ENCODE measurements at regions of chr2 and their contacts with region 1.

Region 1: DNA sequence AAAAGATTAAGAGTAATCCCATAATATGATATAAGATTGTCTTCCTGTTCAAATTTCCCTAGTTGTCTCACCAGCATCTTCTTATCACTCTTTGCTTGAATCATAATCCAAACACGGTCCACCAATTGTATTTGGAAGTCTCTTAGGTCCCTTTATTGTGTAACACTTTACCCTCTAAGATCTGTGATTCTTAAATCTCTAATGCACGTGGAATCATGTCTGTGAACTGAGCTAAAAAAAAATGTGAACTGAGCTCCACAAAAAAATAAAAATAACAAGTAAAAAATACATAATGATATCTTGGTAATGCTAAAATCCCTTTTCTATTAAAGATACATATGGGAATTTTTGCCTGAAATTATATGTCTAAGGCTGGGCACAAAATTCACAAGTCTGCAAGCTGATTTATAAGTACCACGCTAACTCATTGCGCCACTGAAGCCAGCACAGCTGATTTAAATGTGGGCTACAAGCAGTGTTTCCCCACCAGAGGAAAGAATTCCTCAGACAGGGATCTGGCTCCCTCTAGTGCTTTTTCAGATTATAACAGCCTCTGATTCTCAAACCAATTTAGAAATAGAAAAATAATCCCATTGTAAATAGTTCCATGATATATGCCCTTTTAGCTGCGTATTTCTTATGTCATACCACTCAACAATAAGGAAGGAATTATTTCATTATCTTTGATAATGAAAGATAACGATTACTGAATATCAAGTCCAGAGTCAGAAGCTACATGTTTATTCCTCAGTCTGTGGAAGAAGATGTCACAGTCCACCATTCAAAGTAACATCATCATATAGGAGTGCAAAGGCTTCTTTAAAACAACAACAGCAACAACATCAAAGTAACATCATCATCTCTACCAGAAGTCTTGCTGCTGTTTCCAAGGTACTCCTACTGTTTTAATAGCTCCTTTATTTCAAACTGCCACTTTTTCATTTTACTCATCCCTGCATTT is 22.9 kb downstream of the RBM43 start:
- DNase-seq: peak; percentile 51
- H3K4me3 ChIP-seq: no peak overlapping the region
- H3K27ac ChIP-seq: no peak overlapping the region
- H3K4me1 ChIP-seq: peaks cover 7% of the 10 kb centered on the region
- H3K27me3 ChIP-seq: no peaks in the 10 kb centered on the region
- CTCF ChIP-seq: peak; percentile 75 to 79

Region 2: GRCh38 chr2:149799013-149799705 is 1439.6 kb before region 1 on chr2:
- CTCF ChIA-PET with region 1: no interaction called
- dilution Hi-C with region 1: no loop called
- in situ Hi-C with region 1: no loop called
- intact Hi-C with region 1: loop called (anchors 10 kb)
- DNase-seq: peak; percentile 16
- H3K4me3 ChIP-seq: no peak overlapping the region
- H3K27ac ChIP-seq: no peak overlapping the region
- H3K4me1 ChIP-seq: no peaks in the 10 kb centered on the region
- H3K27me3 ChIP-seq: no peaks in the 10 kb centered on the region
- CTCF ChIP-seq: peak; percentile 33 to 60

Region 3: GRCh38 chr2:150478200-150478974 is 760.4 kb before region 1 on chr2:
- CTCF ChIA-PET with region 1: no interaction called
- dilution Hi-C with region 1: no loop called
- in situ Hi-C with region 1: loop called in 1 of 2 experiments (anchors 10 kb)
- intact Hi-C with region 1: loop called (anchors 2 kb)
- DNase-seq: peak; percentile 54
- H3K4me3 ChIP-seq: peak overlapping the region; percentile 3 to 30 (median 21)
- H3K27ac ChIP-seq: peak overlapping the region; percentile 100
- H3K4me1 ChIP-seq: peaks cover 88% of the 10 kb centered on the region
- H3K27me3 ChIP-seq: no peaks in the 10 kb centered on the region
- CTCF ChIP-seq: no peak

Region 4: GRCh38 chr2:150528861-150529801 is 709.7 kb before region 1 on chr2:
- CTCF ChIA-PET with region 1: interaction called, 29 read pairs
- dilution Hi-C with region 1: no loop called
- in situ Hi-C with region 1: no loop called
- intact Hi-C with region 1: no loop called
- DNase-seq: peak; percentile 95
- H3K4me3 ChIP-seq: no peak overlapping the region
- H3K27ac ChIP-seq: peak overlapping the region; percentile 95
- H3K4me1 ChIP-seq: peaks cover 54% of the 10 kb centered on the region
- H3K27me3 ChIP-seq: no peaks in the 10 kb centered on the region
- CTCF ChIP-seq: no peak

Region 5: DNA sequence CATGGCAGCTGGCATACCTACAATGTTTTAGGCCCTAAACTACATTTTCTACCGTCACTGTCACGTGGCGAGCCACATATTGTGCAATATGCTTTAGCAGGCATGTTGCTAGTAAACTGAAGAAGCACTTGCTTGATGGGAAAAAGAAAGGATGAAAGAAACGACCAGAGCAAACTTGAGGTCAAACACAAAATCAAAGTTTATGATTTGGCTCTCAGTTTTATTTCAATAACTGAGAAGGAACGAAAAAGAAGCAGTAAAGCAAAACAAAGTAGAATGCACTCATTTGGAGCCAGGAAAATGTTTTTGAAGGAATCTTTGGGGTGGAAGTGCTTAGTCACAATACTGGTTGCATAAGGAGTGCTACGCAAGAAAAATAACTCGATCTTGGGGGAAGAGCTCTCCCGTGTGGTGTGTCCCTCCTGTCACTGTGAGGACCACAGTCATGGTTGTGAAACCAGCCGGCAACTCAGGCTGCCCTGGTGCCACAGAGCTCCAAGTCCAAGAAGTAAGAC is 327.0 kb before region 1 on chr2:
- CTCF ChIA-PET with region 1: no interaction called
- dilution Hi-C with region 1: no loop called
- in situ Hi-C with region 1: no loop called
- intact Hi-C with region 1: loop called (anchors 10 kb)
- DNase-seq: peak; percentile 70
- H3K4me3 ChIP-seq: no peak overlapping the region
- H3K27ac ChIP-seq: peak overlapping the region; percentile 30
- H3K4me1 ChIP-seq: peaks cover 19% of the 10 kb centered on the region
- H3K27me3 ChIP-seq: no peaks in the 10 kb centered on the region
- CTCF ChIP-seq: peak in 1 of 2 donors; percentile 36

Region 6: DNA sequence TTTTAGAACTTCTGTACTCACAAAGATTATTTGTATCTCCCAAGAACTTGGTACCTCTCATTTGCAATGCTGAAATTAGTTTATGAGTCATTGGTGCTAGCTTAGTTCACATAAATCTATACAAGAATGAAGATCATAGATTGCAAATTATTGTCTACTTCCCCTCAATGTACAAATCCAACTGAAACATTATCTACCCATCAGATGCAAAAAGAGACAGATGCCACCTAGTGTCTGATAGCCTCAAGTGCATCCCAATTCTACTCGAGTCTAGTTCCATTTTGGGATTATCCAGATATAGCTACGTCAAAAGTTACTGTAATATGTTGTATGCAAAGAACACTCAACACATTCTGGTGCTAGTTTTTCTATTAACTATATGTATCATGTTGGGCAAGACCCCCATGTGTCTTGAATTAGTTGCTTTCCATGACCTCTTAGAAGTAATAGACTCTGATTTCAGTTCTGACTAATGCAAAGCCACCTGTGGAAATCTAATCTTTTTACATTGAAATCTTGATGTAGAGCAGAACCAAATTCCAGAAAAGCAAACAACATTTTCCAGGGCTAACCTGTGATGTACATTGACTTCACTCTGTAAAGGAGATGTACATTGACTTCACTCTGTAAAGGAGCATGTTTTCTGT is 187.1 kb before region 1 on chr2:
- CTCF ChIA-PET with region 1: no interaction called
- dilution Hi-C with region 1: no loop called
- in situ Hi-C with region 1: no loop called
- intact Hi-C with region 1: loop called (anchors 5 kb)
- DNase-seq: peak; percentile 60
- H3K4me3 ChIP-seq: no peak overlapping the region
- H3K27ac ChIP-seq: no peak overlapping the region
- H3K4me1 ChIP-seq: peaks cover 29% of the 10 kb centered on the region
- H3K27me3 ChIP-seq: no peaks in the 10 kb centered on the region
- CTCF ChIP-seq: peak; percentile 85 to 86

Region 7: DNA sequence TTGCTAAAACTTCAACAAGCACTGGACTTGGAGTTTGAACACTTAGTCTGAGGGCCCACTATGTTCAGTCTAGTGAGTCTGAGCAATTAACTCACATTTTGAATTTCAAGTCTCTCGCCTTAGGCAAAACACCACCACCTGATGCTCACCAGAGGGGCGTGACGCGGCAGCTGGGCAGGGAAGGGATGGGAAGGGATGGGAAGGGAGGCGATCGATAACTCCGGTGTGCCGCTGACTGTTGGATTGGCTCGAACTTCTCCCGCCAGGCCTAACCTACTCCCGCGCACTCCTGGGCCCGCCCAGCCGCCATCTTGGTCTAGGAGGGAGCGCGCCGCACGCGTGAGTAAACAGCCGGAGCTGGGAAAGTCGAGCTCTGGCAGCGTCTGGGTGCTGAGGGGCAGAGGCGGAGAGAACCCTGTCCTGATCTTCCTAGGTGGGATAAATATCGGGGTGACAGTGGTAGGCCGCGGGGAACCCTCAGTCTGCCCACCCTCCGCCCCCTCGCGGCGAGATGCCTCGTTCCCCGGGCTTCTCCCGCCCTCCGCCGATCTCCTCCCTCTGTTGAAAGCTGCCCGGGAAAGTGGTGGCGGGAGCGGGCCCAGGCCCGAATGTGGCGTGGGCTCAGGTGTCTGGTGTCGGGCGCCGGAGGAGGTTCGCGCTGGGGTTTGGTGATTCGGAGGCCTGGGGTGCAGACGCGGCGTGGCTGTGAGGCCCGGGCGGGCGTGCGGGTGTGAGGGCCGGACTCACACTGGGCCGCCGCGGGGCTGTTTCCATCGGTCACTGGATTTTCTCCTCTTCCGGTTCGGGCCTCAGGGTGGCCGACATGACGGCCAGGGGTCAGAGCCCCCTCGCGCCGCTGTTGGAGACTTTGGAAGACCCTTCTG is 171.0 kb after region 1 on chr2 and contains the start of gene RIF1:
- CTCF ChIA-PET with region 1: interaction called, 27 read pairs
- dilution Hi-C with region 1: no loop called
- in situ Hi-C with region 1: no loop called
- intact Hi-C with region 1: no loop called
- DNase-seq: peak; percentile 92
- H3K4me3 ChIP-seq: peak within 1 kb of the TSS; percentile 81 to 91 (median 85)
- H3K27ac ChIP-seq: peak within 1 kb of the TSS; percentile 80
- H3K4me1 ChIP-seq: no peaks in the 10 kb centered on the region
- H3K27me3 ChIP-seq: no peaks in the 10 kb centered on the region
- CTCF ChIP-seq: peak; percentile 32 to 69
- total RNA-seq, gene RIF1: 33.7 to 45.0 TPM